ENCODE measurements at regions of chr17 and their contacts with region 1.

Region 1: DNA sequence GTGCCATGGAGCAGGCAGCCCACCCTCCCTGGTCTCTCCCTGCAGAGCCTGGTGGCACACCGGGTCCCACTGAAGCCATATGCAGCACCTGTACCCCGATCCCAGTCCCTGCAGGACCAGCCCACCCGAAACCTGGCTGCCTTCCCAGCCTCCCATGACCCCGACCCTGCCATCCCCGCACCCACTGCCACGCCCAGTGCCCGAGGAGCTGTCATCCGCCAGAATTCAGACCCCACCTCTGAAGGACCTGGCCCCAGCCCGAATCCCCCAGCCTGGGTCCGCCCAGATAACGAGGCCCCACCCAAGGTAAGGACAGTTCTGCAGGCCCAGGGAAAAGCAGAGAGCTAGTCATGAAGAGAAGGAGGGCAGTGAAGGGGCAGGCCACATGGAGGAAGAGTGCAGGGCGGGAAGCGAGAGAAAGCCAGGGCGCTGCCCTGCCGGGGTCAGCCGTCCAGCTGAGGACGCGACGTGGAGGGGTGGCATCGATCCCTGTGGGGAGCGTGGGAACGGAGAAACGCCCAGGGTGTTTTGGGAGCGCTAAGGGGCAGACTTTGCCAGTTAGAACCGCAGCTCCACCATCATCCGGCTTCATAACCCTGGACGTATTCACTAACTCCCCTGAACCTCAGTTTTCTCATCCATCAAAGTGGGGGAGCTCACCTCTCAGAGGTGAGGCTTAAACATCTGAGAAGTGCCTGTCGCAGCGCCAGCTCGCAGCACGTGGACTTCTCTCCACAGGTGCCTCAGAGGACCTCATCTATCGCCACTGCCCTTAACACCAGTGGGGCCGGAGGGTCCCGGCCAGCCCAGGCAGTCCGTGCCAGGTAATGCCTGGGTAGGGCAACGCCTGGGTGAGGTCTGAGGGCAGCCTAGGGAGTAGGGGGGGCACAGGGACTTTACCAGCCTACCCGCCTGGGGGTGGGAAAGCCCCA is 7.7 kb upstream of the C17orf107 start:
- DNase-seq: no peak
- H3K4me3 ChIP-seq: no peak overlapping the region
- H3K27ac ChIP-seq: no peak overlapping the region
- H3K4me1 ChIP-seq: no peaks in the 10 kb centered on the region
- H3K27me3 ChIP-seq: no peaks in the 10 kb centered on the region
- CTCF ChIP-seq: no peak
- POLR2A ChIP-seq: no peak

Region 2: DNA sequence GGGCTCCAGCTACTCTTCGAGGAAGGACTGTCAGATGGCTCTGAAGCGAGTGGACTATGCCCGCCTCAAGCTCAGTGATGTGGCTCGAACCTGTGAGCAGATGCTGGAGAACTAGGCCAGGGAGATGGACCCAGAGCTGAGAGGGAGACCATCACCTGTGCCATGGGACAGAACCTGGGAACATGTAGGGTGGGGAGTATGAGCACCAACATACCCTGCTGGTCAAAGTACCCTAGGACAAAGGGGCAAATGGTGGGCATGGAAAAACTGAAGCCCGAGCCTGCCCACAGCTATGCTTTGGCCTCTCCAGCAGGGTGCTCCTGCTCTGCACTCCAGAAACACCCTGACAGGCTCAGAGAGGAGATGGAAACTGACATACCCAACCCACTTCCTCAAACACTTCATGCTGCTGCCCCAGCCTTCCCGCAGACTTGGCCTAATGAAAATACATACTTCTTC is 158.6 kb before region 1 on chr17:
- intact Hi-C with region 1: loop called (anchors 5 kb)
- DNase-seq: no peak
- H3K4me3 ChIP-seq: no peak overlapping the region
- H3K27ac ChIP-seq: no peak overlapping the region
- H3K4me1 ChIP-seq: peaks cover 15% of the 10 kb centered on the region
- H3K27me3 ChIP-seq: no peaks in the 10 kb centered on the region
- CTCF ChIP-seq: no peak
- POLR2A ChIP-seq: no peak